Mammary epithelial cell (primary cell): ENCODE measurements at regions of chr10 and their contacts with region 1.

Region 1: GRCh38 chr10:68566955-68567354 is 6.8 kb downstream of the TET1 start:
- DNase-seq: no peak
- H3K4me3 ChIP-seq: no peak overlapping the region
- H3K27ac ChIP-seq: no peak overlapping the region
- H3K4me1 ChIP-seq: no peaks in the 10 kb centered on the region
- H3K27me3 ChIP-seq: no peaks in the 10 kb centered on the region
- CTCF ChIP-seq: no peak

Region 2: DNA sequence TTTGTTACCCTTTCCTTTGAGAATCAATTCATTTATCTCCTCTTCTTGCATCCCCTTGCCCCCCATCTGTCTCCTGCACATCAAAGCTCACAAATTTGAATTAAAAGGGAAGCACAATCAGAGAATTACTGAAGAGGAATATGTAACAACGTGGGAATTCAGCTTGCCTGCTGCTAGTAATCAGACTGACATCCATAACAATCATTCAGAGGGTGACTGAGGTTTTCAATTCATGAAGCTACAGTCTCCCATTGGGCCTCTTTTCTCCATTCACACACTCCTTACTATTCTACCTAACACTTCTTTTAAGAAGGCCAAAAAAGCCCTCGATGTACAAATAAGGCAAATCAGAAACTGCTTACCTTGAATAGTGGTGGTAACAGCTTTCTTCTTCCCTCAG is 70.9 kb before region 1 on chr10:
- CTCF ChIA-PET with region 1: no interaction called
- dilution Hi-C with region 1: loop called (anchors 5 kb)
- in situ Hi-C with region 1: no loop called
- intact Hi-C with region 1: no loop called
- DNase-seq: no peak
- H3K4me3 ChIP-seq: no peak overlapping the region
- H3K27ac ChIP-seq: no peak overlapping the region
- H3K4me1 ChIP-seq: no peaks in the 10 kb centered on the region
- H3K27me3 ChIP-seq: no peaks in the 10 kb centered on the region
- CTCF ChIP-seq: no peak

Region 3: DNA sequence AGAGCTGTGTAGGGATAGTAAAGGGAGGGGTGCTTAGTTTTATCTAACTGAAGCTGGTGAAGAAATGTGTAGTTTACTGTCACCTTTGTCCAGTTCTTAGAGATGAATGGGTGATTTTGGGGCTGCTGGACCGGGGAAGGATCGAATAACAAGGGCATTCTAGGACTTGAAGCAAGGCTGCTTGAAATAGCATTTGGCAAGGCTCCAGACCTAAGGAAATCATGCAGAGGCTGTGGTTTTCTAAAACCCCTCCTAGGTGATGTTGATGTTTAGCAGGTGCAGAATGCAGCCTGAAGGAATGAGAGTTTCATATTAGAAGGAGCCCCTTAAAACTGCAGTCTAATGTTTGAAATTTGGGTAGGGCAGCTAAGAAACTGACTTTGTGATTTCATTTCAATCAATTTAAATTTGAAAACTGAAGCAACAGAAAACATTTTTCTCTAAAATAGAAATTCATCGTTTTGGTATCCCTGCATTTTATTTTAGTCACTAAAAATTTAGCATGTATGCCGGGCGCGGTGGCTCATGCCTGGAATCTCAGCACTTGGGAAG is 61.7 kb after region 1 on chr10:
- CTCF ChIA-PET with region 1: no interaction called
- dilution Hi-C with region 1: loop called (anchors 5 kb)
- in situ Hi-C with region 1: no loop called
- intact Hi-C with region 1: no loop called
- DNase-seq: no peak
- H3K4me3 ChIP-seq: no peak overlapping the region
- H3K27ac ChIP-seq: no peak overlapping the region
- H3K4me1 ChIP-seq: no peaks in the 10 kb centered on the region
- H3K27me3 ChIP-seq: no peaks in the 10 kb centered on the region
- CTCF ChIP-seq: no peak

Region 4: DNA sequence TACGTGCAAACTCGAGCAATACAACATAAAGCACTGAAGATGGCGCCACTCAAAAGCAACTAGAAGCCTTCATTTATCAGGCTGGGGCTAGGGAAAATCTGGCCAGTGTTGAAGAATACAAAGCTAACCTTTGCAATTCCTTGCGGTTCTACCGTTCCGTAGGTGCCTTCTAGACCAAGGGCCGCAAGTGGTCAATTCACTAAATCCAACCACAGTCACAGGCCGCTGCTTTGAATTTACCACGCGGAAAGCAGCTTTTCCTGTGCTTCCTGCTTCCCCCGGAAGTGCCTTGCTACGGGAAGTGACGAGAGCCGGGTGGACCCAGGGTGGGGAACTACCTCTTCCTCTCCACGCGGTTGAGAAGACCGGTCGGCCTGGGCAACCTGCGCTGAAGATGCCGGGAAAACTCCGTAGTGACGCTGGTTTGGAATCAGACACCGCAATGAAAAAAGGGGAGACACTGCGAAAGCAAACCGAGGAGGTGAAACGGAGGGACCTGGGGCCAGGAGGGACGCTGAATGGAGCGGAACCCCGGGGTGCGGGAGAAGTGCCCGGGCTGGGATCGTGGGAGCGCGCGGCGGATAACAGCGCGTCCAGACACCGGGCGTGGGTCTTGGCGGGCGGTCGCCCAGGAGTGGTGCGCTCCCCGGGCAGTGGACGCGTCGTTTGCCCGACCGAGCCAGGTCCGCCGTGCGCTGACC is 389.0 kb after region 1 on chr10 and contains the start of gene DDX21:
- CTCF ChIA-PET with region 1: no interaction called
- dilution Hi-C with region 1: no loop called
- in situ Hi-C with region 1: no loop called
- intact Hi-C with region 1: no loop called
- DNase-seq: peak; percentile 90
- H3K4me3 ChIP-seq: peak within 1 kb of the TSS; percentile 67 to 82 (median 74)
- H3K27ac ChIP-seq: peak within 1 kb of the TSS; percentile 91
- H3K4me1 ChIP-seq: peaks cover 10% of the 10 kb centered on the region
- H3K27me3 ChIP-seq: no peaks in the 10 kb centered on the region
- CTCF ChIP-seq: peak; percentile 63 to 67
- total RNA-seq, gene DDX21: 92.9 to 142 TPM